Activated CD4-positive, alpha-beta memory T cell treated with anti-CD3 and anti-CD28 coated beads for 36 hours (primary cell): ENCODE measurements at regions of chr7 and their contacts with region 1.

Region 1: GRCh38 chr7:74083117-74083876 is at the start of gene LIMK1:
- DNase-seq: peak; percentile 89
- H3K4me3 Mint-ChIP-seq: peak within 1 kb of the TSS; percentile 83
- H3K27ac Mint-ChIP-seq: peak within 1 kb of the TSS; percentile 65
- H3K4me1 Mint-ChIP-seq: peaks cover 7% of the 10 kb centered on the region
- H3K27me3 Mint-ChIP-seq: no peaks in the 10 kb centered on the region
- total RNA-seq, gene LIMK1: 16.4 to 16.9 TPM

Region 2: DNA sequence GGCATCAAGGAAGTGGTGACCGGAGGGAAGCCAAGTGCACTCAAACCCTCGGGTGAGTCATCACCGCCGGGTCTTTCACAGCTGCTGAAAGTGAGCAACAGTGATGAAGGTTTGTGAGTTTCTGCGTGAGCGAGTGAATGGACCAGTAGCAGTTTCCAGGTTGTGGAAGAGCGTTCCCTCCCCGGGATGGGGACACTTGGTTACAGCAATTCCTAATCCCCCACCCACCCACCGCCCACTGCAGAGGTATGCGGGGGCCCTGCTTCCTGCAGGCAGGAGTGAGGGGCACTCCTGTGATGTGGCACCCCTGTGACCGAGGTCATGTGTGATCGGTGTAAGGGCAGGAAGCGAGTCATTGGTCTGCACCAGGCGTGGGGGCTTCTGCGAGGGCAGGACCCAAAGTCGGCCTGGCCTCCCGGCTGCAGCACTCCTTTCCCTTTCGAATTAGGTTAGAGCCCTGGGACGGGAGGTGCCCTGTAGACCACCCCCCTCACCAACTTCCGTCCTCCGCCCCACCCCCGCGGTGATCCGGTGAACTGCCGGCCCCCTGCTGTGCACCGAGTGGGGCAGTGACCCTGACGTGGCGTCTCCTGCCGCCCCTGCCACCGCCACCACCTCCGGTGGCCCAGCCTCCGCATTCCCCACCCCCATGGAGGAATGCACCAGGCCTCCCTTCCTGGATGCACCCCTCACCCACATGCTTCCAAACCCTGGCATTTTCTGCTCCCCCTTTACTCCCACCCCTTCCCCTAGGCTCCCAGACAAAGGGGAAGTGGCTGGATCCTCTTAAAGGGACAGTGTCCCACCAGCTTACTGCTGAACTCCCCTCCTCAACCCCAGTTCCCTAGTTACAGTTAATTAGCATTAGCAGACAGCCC is 11.2 kb after region 1 on chr7:
- CTCF ChIA-PET with region 1: no interaction called
- POLR2A ChIA-PET with region 1: interaction called, 10 read pairs
- intact Hi-C with region 1: loop called (anchors 1 kb)
- DNase-seq: peak; percentile 91
- H3K4me3 Mint-ChIP-seq: peak overlapping the region; percentile 73
- H3K27ac Mint-ChIP-seq: peak overlapping the region; percentile 82
- H3K4me1 Mint-ChIP-seq: peaks cover 17% of the 10 kb centered on the region
- H3K27me3 Mint-ChIP-seq: no peaks in the 10 kb centered on the region